Vagina (tissue), 2 donors: ENCODE measurements at regions of chr19 and their contacts with region 1.

Region 1: DNA sequence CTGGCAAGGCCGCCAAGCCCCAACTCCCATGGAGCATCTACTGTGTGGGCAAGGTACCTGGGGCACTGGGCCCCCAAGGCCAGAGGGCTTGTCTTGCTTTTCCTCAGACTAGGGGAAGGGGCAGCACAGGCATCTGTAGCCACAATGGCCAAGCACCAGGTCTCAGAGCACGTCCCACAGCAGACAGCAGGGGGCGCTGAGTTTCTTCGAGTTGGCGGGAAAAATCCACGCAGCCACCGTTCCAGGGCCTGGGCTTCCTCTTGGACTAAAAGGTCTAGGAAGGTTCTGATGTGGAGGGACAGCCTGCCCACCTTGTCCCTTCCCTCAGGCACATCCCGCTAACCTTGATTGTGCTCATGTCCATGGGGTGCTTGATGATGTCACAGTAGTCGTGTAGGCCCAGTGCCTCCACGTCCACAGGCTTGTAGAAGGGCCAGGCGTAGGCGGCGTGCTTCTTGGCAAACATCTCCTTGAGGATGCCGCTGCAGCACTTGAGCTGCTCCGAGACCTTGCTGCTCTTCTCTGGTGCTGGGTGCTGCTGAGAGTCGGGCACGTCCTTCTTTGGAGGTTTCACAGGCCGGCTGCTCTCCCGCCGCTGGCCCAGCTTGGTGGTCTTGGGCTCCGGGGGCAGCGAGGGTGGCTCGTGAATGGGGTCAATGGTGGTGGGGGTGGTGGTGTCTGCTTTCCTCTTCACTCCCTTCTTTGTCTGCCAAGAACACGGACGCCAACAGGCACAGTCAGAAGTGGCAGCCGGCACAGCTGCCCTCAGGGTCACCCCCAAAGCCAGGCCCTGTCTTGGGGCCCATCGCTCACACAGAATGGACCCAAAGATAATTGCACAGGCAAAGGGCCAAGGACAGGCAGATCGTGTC is 32.0 kb upstream of the EPHX3 start:
- DNase-seq: no peak
- H3K4me3 ChIP-seq: no peak overlapping the region
- H3K27ac ChIP-seq: peak overlapping the region; percentile 67
- H3K4me1 ChIP-seq: peaks cover 45% of the 10 kb centered on the region
- H3K27me3 ChIP-seq: no peaks in the 10 kb centered on the region
- CTCF ChIP-seq: peak; percentile 66 to 86 (median 69)
- POLR2A ChIP-seq: no peak

Region 2: DNA sequence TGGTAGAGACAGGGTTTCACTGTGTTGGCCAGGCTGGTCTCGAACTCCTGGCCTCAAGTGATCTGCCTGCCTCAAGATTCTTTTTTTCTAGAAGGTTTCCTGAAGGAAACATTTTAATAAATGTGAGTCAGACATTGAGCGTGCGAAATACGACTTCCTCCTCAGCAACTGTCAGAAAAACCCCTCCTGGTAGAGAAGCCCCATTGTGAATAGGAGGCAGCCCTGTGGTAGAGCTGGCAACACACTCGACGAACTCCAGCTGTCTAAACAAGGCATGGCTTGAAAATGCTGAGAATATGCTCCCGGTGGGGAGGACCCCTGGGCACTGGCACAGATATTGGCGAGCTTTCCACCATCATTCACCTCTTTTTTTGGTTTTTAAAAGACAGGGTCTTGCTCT is 564.7 kb before region 1 on chr19:
- intact Hi-C with region 1: no loop called
- DNase-seq: no peak
- H3K4me3 ChIP-seq: no peak overlapping the region
- H3K27ac ChIP-seq: no peak overlapping the region
- H3K4me1 ChIP-seq: no peaks in the 10 kb centered on the region
- H3K27me3 ChIP-seq: no peaks in the 10 kb centered on the region
- CTCF ChIP-seq: no peak
- POLR2A ChIP-seq: no peak

Region 3: DNA sequence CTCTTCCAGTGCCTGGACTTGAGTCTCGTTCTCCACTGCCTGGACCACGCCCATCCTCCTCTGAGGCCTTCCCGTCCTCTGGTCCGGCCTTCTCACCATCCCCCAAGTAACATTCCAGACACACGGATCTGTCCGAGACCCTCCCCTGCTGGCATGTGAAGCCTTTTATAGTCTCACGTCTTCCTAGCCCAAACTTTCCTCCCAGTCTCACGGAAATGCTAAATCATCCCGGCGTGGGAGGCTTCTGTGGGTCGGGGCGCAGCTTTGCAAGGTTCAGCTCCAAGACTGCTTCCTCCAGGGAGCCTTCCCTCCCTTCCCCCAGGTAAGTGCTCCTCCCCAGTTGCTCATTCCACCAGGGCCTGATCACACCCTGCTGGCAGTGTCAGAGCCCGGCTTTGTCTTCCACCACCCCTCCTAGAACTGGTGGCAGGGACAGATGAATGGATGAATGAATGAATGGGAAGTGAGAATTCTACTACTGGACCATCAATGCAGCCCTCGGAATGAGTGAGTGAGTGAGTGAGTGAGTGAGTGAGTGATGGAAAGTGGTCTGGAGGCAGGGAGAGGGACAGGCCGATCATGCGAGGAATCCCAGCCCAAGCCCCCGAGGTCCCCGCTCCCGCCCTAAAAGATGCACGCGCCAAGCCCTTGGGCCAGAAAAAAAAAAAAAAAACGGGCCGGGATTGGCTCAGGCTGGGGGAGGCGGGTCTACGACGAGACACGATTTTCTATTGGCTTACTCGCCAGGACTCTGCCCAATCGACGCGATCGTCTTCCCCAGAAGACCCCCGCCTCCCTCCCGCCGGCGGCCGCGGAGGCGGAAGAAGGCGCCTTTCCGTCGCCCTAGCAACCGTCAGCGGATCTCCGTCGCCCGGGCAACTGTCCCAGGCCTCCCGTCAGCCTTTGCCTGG is 41.3 kb before region 1 on chr19:
- intact Hi-C with region 1: no loop called
- DNase-seq: no peak
- H3K4me3 ChIP-seq: peak overlapping the region; percentile 72 to 80
- H3K27ac ChIP-seq: peak overlapping the region; percentile 75
- H3K4me1 ChIP-seq: peaks cover 20% of the 10 kb centered on the region
- H3K27me3 ChIP-seq: no peaks in the 10 kb centered on the region
- CTCF ChIP-seq: no peak
- POLR2A ChIP-seq: no peak

Region 4: GRCh38 chr19:15241259-15241910 is 22.9 kb before region 1 on chr19:
- intact Hi-C with region 1: no loop called
- DNase-seq: no peak
- H3K4me3 ChIP-seq: no peak overlapping the region
- H3K27ac ChIP-seq: no peak overlapping the region
- H3K4me1 ChIP-seq: peaks cover 16% of the 10 kb centered on the region
- H3K27me3 ChIP-seq: no peaks in the 10 kb centered on the region
- CTCF ChIP-seq: no peak
- POLR2A ChIP-seq: no peak

Region 5: DNA sequence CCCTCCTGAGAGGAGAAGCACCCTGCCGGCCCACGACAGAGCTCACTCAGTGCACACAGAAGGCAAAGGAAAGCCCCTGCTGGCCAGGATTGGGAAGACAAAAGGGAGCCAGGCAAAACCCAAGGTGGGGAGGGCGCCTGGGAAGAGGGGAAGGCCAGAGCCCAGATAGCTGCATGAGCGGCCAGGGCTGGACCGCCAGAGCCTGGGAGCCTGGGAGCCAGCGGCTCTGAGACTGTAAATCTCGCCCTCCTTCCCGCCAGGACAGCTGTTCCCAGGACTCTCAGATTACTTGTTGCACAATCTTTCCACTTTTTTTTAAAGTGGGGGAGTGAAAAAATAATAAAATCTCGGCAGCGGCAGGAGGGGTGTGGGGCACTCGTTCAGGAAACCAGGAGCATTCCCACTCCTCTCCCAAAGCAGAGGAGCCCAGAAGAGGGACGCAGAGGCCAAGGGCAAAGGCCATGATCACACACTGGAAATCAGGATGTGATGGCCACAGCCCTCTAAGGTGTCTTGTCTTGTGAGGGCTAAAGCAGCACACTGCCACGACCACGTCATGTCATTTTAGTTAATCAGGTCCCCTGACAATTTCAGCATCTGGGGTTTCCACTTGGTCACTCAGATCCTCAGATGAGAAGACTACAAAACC is 12.4 kb before region 1 on chr19:
- intact Hi-C with region 1: loop called (anchors 2 kb)
- DNase-seq: peak in 1 of 2 donors; percentile 94
- H3K4me3 ChIP-seq: peak overlapping the region; percentile 1 to 25
- H3K27ac ChIP-seq: peak overlapping the region; percentile 91
- H3K4me1 ChIP-seq: peaks cover 70% of the 10 kb centered on the region
- H3K27me3 ChIP-seq: no peaks in the 10 kb centered on the region
- CTCF ChIP-seq: peak in 1 of 3 experiments; percentile 68
- POLR2A ChIP-seq: no peak

Region 6: DNA sequence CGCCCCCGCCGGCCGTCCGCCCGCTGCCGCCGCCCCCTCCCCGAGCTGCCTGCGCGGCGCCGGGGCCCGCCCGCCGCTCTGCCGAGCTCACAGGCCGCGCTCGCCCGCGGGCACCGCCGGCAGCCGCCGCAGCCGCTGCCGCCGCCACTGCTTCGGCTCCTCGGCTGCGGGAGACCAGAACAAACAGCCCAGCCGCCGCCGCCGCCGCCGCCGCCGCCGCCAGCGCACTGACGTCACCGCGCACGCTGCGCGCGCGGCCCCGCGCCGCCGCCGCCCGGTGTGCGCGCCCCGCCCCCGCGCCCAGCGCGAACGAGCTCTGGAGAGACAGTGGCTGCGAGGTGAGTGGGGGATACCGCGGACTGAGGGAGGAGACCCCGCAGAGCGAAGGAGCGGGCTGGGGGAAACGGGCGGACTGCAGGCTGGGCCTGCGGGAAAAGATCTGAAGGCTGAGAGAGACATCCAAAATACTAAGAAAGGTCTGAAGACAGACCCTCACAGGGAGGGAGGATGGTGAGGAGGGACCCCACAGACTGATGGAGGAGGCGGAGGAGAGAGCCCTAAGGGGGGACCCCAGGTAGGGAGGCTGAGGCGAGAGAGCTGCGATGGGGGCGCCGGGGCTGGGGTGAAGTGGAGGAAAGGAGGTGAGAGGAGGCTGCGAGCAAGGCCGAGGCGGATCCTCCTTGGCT is 68.2 kb after region 1 on chr19 and contains the start of gene BRD4:
- intact Hi-C with region 1: loop called (anchors 2 kb)
- DNase-seq: peak in 1 of 2 donors; percentile 88
- H3K4me3 ChIP-seq: peak within 1 kb of the TSS; percentile 97 to 98
- H3K27ac ChIP-seq: peak within 1 kb of the TSS; percentile 94
- H3K4me1 ChIP-seq: peaks cover 55% of the 10 kb centered on the region
- H3K27me3 ChIP-seq: no peaks in the 10 kb centered on the region
- CTCF ChIP-seq: no peak
- POLR2A ChIP-seq: no peak
- total RNA-seq, gene BRD4: 53.0 TPM

Region 7: DNA sequence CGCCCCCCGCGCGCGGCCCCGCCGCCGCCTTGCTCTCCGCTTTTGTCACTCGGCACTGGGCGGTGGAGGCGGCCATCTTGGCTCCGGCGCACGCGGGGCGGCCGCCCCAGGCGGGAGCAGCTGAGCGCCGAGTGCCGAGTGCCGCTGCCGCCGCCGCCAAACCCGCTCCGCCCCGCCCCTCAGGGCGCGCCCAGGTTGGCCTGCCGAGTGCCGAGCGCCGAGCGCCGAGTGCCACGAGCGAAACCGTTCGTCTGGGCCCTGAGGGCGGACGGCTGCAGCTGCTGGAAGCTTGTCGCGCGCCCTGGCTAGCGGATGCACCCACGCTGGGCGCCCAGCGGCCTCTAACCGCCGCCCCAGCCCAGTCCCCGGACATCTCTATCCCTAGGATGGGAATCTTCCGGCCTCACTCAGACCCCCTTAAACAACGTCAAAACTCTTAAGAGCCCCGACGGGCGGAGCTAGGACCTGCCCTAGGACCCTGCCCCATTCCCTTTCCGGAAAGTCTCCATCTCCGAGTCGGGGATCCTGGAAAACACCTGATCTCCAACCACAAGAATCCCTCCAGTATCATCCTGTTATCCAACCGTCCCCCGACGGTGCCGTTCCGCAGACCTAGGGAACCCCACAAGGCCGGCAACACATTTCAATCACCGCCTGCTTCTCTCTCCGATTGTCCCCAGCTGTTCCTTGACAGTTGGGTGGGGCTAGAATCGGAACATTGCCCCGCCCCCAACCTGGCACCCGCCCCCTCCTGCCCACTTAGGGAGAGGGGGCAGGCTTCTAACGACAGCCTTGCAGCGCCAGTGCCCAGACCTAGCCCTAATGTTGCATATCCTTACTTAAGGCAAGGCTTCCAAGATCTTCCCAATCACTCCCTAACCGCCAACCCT is 168.6 kb after region 1 on chr19:
- intact Hi-C with region 1: loop called (anchors 10 kb)
- DNase-seq: no peak
- H3K4me3 ChIP-seq: peak overlapping the region; percentile 77 to 86
- H3K27ac ChIP-seq: peak overlapping the region; percentile 88
- H3K4me1 ChIP-seq: peaks cover 56% of the 10 kb centered on the region
- H3K27me3 ChIP-seq: no peaks in the 10 kb centered on the region
- CTCF ChIP-seq: no peak
- POLR2A ChIP-seq: peak in 1 of 2 donors; percentile 20

Region 8: GRCh38 chr19:15555759-15556633 is 291.7 kb after region 1 on chr19:
- intact Hi-C with region 1: loop called (anchors 10 kb)
- DNase-seq: peak in 1 of 2 donors; percentile 90
- H3K4me3 ChIP-seq: peak overlapping the region; percentile 27 to 35
- H3K27ac ChIP-seq: peak overlapping the region; percentile 50
- H3K4me1 ChIP-seq: peaks cover 22% of the 10 kb centered on the region
- H3K27me3 ChIP-seq: peaks cover 5% of the 10 kb centered on the region
- CTCF ChIP-seq: peak; percentile 66 to 93 (median 72)
- POLR2A ChIP-seq: no peak